Astrocyte of the cerebellum (primary cell): ENCODE measurements at regions of chr16 and their contacts with region 1.

Region 1: DNA sequence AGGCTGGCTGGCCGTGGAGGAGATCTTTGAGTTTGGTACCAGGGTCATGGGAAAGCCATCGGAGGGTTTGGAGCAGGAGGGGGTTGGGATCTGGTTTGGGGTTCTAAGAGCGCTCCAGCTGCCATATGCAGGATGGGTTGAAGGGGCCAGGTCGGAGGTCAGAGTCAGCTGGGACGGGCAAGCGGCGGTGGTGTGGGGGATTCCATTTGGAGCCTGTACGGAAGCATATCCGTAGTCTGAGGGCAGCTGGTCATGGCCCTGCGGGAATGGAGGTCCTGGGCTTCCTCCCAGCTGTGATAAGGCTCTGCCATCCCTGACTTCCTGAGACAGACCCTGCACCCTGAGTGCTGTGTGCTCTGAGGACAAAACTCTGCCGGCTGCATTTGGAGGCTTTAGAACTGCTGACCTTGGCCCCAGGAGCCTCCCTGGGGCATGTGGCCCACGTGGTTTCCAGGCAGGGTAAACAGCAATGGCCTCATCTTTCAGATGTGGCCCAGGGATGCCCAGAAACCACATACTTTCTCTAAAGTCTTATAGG is 46.5 kb downstream of the ATP2C2 start:
- DNase-seq: no peak
- H3K4me3 ChIP-seq: no peak overlapping the region
- CTCF ChIP-seq: no peak

Region 2: DNA sequence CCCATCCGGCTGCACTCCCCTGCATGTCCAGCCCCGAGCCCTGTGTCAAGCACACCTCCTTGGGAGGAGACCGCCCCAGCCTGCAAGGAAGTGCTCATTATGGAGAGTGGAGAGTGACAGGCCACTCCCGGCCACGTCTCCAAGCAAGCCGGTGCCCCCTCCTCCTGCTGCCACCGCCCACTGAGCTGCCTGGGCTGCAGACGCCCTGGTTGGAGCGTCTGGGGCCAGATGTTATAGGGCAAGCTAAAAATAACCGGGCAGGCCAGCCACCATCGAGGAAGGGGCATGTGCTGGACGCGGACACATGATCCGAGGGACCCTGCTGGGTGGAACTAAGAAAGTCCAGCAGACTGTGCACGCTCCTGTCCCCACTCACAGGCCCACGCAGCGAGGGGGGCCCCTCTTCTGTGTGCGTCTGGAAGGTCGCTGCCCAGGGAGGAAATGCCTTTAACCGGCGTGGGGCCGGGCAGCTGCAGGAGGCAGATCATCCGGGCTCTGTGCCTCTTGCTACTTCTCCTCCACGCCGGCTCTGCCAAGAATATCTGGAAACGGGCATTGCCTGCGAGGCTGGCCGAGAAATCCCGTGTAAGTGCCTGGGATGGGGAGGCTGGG is 120.2 kb before region 1 on chr16 and contains the start of gene WFDC1:
- in situ Hi-C with region 1: no loop called
- DNase-seq: no peak
- H3K4me3 ChIP-seq: no peak within 1 kb of the TSS
- CTCF ChIP-seq: no peak

Region 3: DNA sequence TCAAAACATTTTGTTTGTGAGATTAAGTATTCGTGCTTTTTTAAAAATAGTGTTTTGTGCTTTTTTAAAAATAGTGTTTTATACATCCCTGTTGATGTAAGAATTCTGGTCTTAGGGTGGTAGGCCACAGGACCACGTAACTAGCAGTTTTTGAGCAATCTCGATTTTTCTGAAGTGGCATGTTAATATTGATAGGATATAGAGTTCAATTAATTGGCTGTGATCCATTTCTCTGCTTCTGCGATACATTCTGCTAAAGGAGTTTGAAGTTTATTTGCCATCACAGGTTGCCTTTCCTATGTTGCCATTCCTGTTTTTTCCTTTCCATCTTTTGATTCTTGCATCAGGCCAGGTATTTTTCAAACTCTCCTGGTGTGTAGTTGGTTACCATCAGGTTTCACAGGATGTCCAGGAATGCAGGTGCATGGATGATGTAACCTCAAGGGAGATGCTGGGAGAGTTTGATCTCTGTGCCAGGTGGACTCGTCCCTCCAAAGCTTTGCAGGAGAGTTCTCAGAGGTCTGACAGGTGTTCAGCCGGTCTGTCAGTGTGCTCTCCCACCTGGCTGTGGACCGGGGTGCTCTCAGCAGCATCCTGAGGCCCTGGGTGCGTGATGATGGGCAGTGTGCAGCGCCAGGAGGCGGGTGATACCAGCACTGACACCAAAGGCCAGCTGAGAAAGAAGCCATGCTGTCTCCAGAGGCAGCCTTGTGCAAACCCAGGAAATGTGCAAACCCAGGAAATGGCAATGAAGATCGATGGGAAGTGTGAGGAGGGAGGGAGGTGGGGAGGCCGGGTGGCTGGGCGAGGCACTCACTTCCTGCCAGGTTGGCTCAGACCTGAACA is 44.9 kb before region 1 on chr16:
- in situ Hi-C with region 1: loop called (anchors 5 kb)
- DNase-seq: no peak
- H3K4me3 ChIP-seq: no peak overlapping the region
- CTCF ChIP-seq: no peak